Posterior cingulate gyrus (tissue), 11 donors: ENCODE measurements at regions of chr10 and their contacts with region 1.

Region 1: DNA sequence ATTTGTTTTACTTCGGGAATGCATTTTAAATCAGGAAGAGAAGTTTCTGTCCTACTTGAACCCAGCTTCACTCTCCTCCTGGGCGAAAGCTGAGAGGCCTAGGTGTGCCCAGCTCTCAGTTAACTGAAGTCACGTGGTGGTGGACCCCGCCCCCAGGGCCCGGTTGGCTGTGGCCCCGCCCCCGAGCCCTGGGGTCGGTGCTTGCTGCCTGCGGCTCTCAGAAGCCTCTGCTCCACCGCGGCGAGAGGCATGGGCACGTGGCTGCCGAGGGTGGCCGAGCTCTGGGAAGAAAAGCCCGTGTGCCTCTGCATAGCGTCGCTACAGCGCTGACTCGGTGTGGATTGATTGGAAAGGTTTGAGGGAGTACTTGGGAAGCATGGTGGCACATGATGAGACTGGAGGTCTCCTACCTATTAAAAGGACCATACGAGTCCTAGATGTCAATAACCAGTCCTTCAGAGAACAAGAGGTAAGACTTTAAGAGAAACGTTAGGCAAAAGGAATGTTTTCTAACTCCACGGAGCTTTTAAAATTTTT is 34.1 kb downstream of the NET1 start:
- DNase-seq: peak; percentile 15 to 94 (median 44)

Region 2: GRCh38 chr10:5623081-5623748 is 176.8 kb after region 1 on chr10:
- intact Hi-C with region 1: loop called (anchors 1 kb)
- DNase-seq: peak; percentile 51 to 97 (median 83)

Region 3: DNA sequence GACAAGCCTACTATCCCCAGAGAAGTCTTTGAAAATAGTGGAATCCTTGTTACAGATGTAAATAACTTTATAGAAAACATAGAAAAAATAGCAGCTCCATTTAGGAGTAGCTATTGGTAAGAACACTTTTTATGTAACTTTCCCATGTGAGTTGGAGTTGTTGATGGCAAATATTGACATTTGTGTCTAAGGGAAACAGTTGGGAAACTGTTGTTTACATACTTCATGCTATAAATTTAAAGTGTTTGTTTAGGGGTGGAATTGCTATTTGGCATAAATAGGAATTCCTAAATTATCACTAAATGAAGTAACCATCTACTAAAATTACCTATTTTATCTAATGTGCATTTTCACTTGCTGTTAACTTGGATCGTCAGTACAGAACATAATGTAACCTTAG is 316.1 kb after region 1 on chr10:
- intact Hi-C with region 1: no loop called
- DNase-seq: no peak

Region 4: DNA sequence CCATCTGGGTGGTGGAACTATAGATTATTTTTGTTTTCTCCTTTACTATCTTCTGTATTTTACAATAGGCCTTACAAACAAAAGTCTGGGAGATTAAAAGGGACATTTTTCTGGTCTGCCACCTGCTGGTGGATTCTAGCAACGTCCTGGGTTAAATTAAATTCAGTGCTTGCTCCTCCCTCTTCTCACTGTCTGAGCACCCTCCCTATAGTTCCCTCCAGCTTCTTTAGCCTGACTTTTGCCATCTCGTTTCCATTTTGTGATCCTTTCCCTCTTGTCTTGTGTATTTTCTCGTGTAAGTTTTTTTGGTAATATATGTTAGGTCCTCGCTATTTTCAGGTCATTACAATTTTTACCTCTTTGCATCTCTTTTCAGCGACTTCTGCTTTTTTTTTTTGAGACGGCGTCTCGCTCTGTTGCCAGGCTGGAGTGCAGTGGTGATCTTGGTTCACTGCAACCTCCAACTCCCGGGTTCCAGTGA is 427.1 kb after region 1 on chr10:
- intact Hi-C with region 1: loop called (anchors 10 kb)
- DNase-seq: peak in 7 of 10 donors; percentile 34 to 88 (median 73)